Dorsolateral prefrontal cortex (tissue), 120 donors: ENCODE measurements at regions of chr1 and their contacts with region 1.

Region 1: GRCh38 chr1:59296358-59297256 is at the start of gene FGGY:
- DNase-seq: peak; percentile 82 to 97 (median 94)
- H3K4me3 ChIP-seq: peak within 1 kb of the TSS; percentile 32 to 86 (median 68)
- H3K27ac ChIP-seq: peak within 1 kb of the TSS; percentile 39 to 99 (median 96)
- H3K27me3 ChIP-seq: no peaks in the 10 kb centered on the region
- CTCF ChIP-seq: peak in 14 of 56 donors; percentile 2 to 41 (median 16)
- total RNA-seq, gene FGGY: 23.4 to 68.4 (median 36.5) TPM

Region 2: DNA sequence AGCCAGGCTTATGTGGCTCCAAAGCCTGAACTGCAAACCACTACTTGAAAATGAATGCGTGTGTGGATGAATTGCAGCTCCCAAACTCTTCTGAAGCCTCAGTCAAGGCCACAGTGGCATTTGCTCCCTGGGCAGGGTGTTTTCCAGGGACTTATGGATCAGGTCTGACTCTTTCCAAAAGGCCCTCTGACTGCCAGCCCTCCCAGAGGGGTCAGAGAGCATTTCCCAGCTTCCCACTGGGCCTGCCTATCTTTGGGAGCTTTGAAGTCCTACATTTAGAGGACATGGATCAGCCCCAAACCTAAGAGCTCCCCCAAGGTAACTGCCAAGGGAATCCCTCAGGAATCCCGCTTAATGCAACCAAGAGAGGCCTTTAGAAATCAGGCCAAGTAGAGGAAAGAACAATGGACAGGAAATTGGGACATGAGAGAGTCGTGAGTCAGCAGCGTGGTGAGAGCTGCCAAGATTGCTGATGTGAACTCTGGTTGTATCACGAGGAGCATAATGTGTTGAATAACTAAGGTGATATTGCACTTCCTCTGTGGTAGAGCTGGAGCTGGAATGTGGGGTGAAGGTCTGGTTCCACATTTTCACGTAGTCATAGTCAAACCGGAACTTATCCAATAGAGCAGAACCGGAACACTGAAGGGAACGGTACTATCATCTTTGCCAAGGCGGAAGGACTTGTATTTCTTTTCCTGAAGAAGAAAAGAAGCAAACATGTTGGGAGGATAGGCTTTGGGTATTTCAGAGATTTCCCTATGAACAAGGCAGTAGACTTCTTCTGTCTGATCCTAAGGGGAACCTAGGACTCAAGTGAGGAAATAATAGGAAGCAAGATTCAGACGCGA is 413.3 kb before region 1 on chr1:
- intact Hi-C with region 1: loop called in 1 of 2 experiments (anchors 10 kb)
- DNase-seq: peak in 4 of 10 donors; percentile 51 to 71 (median 66)
- H3K4me3 ChIP-seq: no peak overlapping the region
- H3K27ac ChIP-seq: peak overlapping the region in 55 of 59 donors; percentile 2 to 91 (median 58)
- H3K27me3 ChIP-seq: no peaks in the 10 kb centered on the region
- CTCF ChIP-seq: no peak

Region 3: DNA sequence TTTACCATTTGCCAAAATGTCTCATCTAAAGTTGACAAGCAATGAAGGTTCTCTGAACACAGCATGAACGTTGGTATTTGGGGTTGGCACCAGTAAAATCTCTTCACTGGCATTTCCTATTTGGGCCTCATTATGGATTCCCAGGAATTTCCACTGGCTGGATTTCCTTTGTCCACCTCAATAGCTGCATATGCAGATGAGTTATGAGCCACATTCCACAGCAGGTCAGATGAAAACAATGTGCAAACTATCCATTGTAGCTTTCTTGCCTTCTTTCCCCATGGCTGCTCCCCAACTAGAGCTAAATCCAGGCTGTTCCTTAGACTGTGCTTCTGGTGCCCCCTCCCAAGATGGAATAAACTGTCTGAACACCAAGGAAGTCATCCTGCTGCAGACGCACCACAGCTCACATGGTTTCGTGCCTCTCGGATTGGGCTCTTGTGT is 167.8 kb before region 1 on chr1:
- intact Hi-C with region 1: no loop called
- DNase-seq: no peak
- H3K4me3 ChIP-seq: no peak overlapping the region
- H3K27ac ChIP-seq: no peak overlapping the region
- H3K27me3 ChIP-seq: peaks cover 0 to 3% (median 0%) of the 10 kb centered on the region in 45 donors
- CTCF ChIP-seq: no peak

Region 4: GRCh38 chr1:59699227-59699847 is 402.7 kb after region 1 on chr1:
- intact Hi-C with region 1: loop called (anchors 5 to 10 kb)
- DNase-seq: peak in 1 of 10 donors; percentile 22
- H3K4me3 ChIP-seq: no peak overlapping the region
- H3K27ac ChIP-seq: peak overlapping the region in 1 of 59 donors; percentile 2
- H3K27me3 ChIP-seq: no peaks in the 10 kb centered on the region
- CTCF ChIP-seq: peak; percentile 89 to 98 (median 95)

Region 5: DNA sequence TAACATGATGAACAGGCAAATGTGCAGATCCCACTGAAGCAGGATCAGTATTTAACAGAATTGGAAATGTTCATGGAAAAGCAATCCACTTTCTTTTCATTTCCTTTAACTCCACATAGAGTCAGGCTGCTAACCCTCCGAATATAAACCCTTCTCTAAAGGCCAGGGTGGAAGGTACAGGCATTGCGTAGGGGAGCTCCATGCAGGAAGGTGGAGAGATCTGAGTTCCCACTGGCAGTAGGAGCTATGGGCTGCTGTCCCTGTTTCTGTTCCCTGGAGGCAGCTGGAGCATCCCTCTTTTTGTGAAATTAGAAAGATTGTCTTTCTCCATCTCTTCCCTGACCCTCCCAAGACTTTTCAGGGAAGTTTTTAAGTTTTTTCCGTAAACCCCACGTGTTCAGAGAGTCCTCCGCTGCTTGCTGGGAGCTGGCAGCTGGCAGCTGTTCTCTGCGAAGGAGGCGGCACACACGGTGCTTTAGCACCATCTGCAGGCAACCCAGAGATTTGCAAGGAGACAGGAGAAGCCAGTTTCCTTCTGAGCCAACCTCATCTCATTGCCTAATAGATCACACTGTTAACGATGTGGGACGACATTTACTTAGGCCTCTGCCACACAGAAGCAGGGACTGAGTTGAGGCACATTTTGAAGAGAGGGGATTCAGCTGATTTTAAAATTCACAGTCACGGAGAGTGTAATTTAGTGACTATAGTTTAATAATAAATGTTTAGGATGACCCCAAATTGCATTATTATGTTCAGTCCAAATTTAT is 462.7 kb after region 1 on chr1:
- intact Hi-C with region 1: loop called in 1 of 2 experiments (anchors 5 kb)
- DNase-seq: peak; percentile 62 to 88 (median 82)
- H3K4me3 ChIP-seq: peak overlapping the region in 45 of 59 donors; percentile 3 to 59 (median 35)
- H3K27ac ChIP-seq: peak overlapping the region in 9 of 59 donors; percentile 8 to 59 (median 30)
- H3K27me3 ChIP-seq: no peaks in the 10 kb centered on the region
- CTCF ChIP-seq: peak; percentile 68 to 100 (median 96)